Activated T-helper 2 cell treated with anti-CD3 and anti-CD28 coated beads, Interferon-gamma antibody, Interleukin-2, Interleukin-4, amounts not matched to agents 10 μg/mL and 5 μg/mL and 100 μg/mL, durations not matched to agents 14 hours and 24 hours and 36 hours (primary cell): ENCODE measurements at regions of chr10 and their contacts with region 1.

Region 1: DNA sequence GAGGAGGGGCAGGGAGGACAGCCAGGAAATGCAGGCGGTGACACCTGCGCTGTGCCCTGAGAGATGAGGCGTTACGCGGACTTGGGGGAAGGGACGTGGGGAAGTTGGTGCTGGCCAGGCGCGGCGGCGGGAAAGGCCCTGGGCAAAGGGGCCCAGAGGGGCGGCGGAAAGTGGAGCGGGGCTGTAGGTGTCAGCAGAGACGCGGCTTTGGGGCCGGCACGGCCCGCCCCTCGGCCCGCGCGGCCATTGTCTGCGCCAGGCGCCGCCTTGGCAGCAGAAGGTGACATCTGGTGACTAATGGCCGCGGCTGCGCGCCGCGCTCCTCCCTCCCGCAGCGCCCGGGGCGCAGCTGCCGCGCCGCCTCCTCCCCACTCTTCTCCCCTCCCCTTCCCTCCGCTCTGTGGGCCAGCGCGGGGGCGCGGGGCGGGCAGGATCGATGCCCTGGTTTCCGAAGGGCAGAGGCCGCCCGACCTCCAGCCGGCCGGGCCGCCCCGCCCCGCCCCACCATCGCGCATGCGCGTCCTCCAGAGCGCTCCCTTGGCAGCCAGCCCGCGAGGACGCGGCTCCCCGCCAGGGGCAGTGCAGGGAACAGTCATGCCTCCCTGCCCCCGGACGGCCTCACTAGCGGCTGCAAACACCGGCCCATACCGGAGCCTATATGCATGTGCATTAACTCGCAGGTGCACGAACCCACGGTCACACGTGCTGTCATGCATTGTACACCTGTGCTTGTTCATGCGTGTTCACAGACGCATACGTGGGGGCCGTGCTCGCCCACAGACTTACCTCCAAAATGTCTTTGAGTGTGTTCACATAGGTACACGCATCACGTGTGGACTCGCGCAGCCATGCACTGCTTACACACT is 269.6 kb downstream of the RPS24 start:
- DNase-seq: peak; percentile 91
- H3K4me3 Mint-ChIP-seq: peak overlapping the region; percentile 87
- H3K27ac Mint-ChIP-seq: peak overlapping the region; percentile 94
- H3K4me1 Mint-ChIP-seq: peaks cover 16% of the 10 kb centered on the region
- H3K27me3 Mint-ChIP-seq: peaks cover 20% of the 10 kb centered on the region

Region 2: GRCh38 chr10:78047314-78047891 is 255.8 kb before region 1 on chr10:
- intact Hi-C with region 1: loop called (anchors 1 kb)
- DNase-seq: peak; percentile 68
- H3K4me3 Mint-ChIP-seq: no peak overlapping the region
- H3K27ac Mint-ChIP-seq: no peak overlapping the region
- H3K4me1 Mint-ChIP-seq: peaks cover 10% of the 10 kb centered on the region
- H3K27me3 Mint-ChIP-seq: no peaks in the 10 kb centered on the region

Region 3: GRCh38 chr10:78362406-78363022 is 59.3 kb after region 1 on chr10:
- intact Hi-C with region 1: no loop called
- DNase-seq: no peak
- H3K4me3 Mint-ChIP-seq: no peak overlapping the region
- H3K27ac Mint-ChIP-seq: peak overlapping the region; percentile 18
- H3K4me1 Mint-ChIP-seq: peaks cover 13% of the 10 kb centered on the region
- H3K27me3 Mint-ChIP-seq: no peaks in the 10 kb centered on the region

Region 4: DNA sequence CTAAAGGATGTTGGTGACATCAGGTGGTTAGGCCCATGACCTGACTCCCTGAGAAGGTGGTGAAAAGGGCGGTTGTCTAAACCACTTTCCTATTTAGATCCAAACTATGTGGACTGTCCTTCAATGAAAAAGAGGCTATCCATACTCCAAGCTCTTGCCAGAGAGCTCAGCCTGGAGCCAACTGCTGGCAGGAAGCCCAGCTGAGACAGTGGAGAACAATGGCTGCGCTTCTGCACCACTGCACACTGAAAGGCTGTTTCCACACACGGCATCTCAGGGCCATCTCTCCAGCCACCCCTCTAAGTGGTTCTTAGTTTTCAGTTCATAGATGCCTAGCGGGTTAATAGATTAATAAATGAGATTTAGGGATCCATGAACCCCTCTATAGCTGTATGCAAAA is 276.8 kb after region 1 on chr10:
- intact Hi-C with region 1: loop called (anchors 1 kb)
- DNase-seq: no peak
- H3K4me3 Mint-ChIP-seq: no peak overlapping the region
- H3K27ac Mint-ChIP-seq: no peak overlapping the region
- H3K4me1 Mint-ChIP-seq: peaks cover 18% of the 10 kb centered on the region
- H3K27me3 Mint-ChIP-seq: peaks cover 2% of the 10 kb centered on the region

Region 5: GRCh38 chr10:78685466-78686163 is 382.4 kb after region 1 on chr10:
- intact Hi-C with region 1: no loop called
- DNase-seq: no peak
- H3K4me3 Mint-ChIP-seq: no peak overlapping the region
- H3K27ac Mint-ChIP-seq: no peak overlapping the region
- H3K4me1 Mint-ChIP-seq: no peaks in the 10 kb centered on the region
- H3K27me3 Mint-ChIP-seq: no peaks in the 10 kb centered on the region

Region 6: DNA sequence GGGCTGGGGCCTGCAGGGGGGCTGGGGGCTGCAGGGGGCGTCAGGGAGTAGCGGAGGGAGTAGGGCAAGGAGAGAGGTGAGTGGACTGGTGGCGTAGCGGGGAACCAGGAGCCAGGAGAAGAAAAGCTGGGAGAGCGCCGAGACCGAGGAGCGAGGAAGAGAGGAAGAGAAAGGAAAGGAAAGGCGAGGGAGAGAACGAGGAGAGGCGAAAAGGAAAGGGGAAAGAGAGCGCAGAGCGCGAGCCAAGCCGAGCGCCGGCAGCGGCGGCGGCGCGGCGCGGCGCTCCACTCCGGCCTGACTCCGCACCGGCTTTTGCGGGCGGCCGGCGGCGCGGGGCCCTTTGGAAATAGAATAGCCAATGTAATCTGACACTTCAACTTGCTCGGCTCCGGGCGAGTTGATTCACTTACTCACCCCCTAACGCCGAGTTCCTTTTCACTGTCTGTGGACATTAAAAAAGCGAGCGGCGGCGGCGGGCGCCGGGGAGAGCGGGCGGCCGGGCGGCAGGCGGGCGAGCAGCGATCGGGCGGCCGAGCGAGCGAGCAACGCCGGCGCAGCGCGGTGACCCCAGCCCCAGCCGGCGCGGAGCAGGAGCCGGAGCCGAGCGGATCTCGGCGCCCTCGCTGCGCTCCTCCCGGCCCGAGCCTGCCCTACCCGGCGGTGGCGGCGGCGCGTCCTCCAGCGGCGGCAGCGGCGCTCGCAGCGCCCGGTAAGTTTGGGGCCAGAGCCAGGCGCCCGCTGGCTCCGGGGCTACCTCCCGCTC is 765.5 kb after region 1 on chr10 and contains the start of gene ZMIZ1:
- intact Hi-C with region 1: loop called (anchors 1 kb)
- DNase-seq: peak; percentile 81
- H3K4me3 Mint-ChIP-seq: peak within 1 kb of the TSS; percentile 86
- H3K27ac Mint-ChIP-seq: peak within 1 kb of the TSS; percentile 80
- H3K4me1 Mint-ChIP-seq: peaks cover 29% of the 10 kb centered on the region
- H3K27me3 Mint-ChIP-seq: peaks cover 13% of the 10 kb centered on the region
- total RNA-seq, gene ZMIZ1: 79.2 and 80.4 TPM in 2 replicates

Region 7: GRCh38 chr10:79322616-79323543 is 1019.7 kb after region 1 on chr10:
- intact Hi-C with region 1: loop called (anchors 2 kb)
- DNase-seq: peak; percentile 72
- H3K4me3 Mint-ChIP-seq: peak overlapping the region; percentile 68
- H3K27ac Mint-ChIP-seq: peak overlapping the region; percentile 98
- H3K4me1 Mint-ChIP-seq: peaks cover 67% of the 10 kb centered on the region
- H3K27me3 Mint-ChIP-seq: no peaks in the 10 kb centered on the region